ENCODE measurements at regions of chr9 and their contacts with region 1.

Region 1: GRCh38 chr9:73200694-73201452 is 49.2 kb downstream of the ANXA1 start:
- DNase-seq: no peak
- ATAC-seq: peak; percentile 82
- H3K4me3 ChIP-seq: no peak overlapping the region
- H3K27ac ChIP-seq: no peak overlapping the region
- H3K4me1 ChIP-seq: no peaks in the 10 kb centered on the region
- H3K27me3 ChIP-seq: no peaks in the 10 kb centered on the region
- CTCF ChIP-seq: peak in 2 of 3 experiments; percentile 43 to 58; a peak in 3 of 6 replicates
- EP300 ChIP-seq: no peak
- POLR2A ChIP-seq: no peak
- RAD21 ChIP-seq: peak; percentile 66

Region 2: DNA sequence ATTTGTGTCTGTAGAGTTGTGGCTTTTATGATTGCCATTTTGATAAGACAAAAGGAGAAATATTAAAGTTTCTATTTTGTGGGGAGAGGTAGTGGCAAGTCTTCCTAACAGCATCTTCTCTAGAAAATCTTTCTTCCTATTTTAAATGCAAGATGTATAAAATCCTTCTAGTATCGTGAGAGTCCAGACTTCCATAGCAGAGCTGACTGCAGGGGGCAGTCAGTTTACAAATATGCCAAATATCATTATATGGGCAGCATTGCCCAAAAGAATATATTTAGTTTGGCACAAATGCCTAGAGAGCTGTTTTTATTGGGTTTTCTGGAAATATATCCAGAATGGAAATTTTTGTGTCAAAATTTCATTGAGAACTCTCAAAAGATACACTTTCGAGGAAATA is 165.9 kb before region 1 on chr9:
- CTCF ChIA-PET with region 1: no interaction called
- POLR2A ChIA-PET with region 1: no interaction called
- RAD21 ChIA-PET with region 1: no interaction called
- SMC1A ChIA-PET with region 1: no interaction called
- in situ Hi-C with region 1: no loop called
- intact Hi-C with region 1: no loop called
- DNase-seq: no peak
- ATAC-seq: no peak
- H3K4me3 ChIP-seq: no peak overlapping the region
- H3K27ac ChIP-seq: no peak overlapping the region
- H3K4me1 ChIP-seq: no peaks in the 10 kb centered on the region
- H3K27me3 ChIP-seq: no peaks in the 10 kb centered on the region
- CTCF ChIP-seq: no peak
- EP300 ChIP-seq: no peak
- POLR2A ChIP-seq: no peak
- RAD21 ChIP-seq: no peak

Region 3: GRCh38 chr9:73132034-73132776 is 68.7 kb before region 1 on chr9:
- CTCF ChIA-PET with region 1: no interaction called
- POLR2A ChIA-PET with region 1: no interaction called
- RAD21 ChIA-PET with region 1: no interaction called
- SMC1A ChIA-PET with region 1: no interaction called
- in situ Hi-C with region 1: no loop called
- intact Hi-C with region 1: no loop called
- DNase-seq: peak; percentile 55
- ATAC-seq: peak; percentile 89
- H3K4me3 ChIP-seq: peak overlapping the region; percentile 52
- H3K27ac ChIP-seq: peak overlapping the region; percentile 82
- H3K4me1 ChIP-seq: peaks cover 3% of the 10 kb centered on the region; the same call in 1 of the 2 replicates
- H3K27me3 ChIP-seq: no peaks in the 10 kb centered on the region
- CTCF ChIP-seq: no peak
- EP300 ChIP-seq: no peak
- POLR2A ChIP-seq: peak; percentile 55
- RAD21 ChIP-seq: no peak

Region 4: DNA sequence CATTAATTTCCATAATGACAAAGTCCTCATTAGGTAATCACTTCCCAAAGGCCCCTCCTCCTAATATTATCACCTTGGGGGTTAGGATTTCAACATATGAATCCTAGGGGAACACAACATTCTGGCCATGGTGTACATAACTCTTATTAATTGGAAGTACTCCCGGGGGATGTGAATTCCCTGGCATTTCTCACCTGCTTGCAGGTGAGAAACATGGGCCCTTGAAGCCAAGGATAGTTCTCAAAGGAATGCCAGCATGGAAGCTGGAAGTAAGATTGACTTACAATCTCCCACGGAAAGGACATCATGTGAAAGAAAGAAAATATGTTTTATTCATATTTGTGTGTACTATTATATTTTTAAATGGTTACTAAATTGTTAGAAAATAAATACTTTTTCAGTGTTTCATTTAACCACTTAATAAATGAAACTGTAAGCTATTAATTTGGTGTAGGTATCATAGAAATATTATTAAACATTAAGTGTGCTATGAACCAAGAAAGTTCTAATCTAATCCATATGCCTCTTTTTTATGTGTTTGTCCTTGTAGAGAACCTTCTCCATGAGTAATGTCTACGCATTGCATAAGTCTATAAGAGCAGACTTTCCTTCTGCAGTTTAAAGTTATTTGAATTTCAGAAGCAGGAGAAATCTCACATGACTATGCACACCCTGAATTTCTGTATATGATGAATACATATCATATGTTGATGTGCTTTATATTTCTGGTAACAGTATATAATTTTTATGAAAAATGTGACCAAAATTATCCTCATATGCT is 10.2 kb after region 1 on chr9:
- CTCF ChIA-PET with region 1: interaction called, 70 read pairs
- POLR2A ChIA-PET with region 1: interaction called, 3 read pairs
- RAD21 ChIA-PET with region 1: interaction called, 24 read pairs
- SMC1A ChIA-PET with region 1: interaction called, 32 read pairs
- in situ Hi-C with region 1: no loop called
- intact Hi-C with region 1: no loop called
- DNase-seq: no peak
- ATAC-seq: no peak
- H3K4me3 ChIP-seq: no peak overlapping the region
- H3K27ac ChIP-seq: no peak overlapping the region
- H3K4me1 ChIP-seq: no peaks in the 10 kb centered on the region
- H3K27me3 ChIP-seq: no peaks in the 10 kb centered on the region
- CTCF ChIP-seq: no peak
- EP300 ChIP-seq: no peak
- POLR2A ChIP-seq: no peak
- RAD21 ChIP-seq: no peak

Region 5: GRCh38 chr9:73229543-73229942 is 28.7 kb after region 1 on chr9:
- CTCF ChIA-PET with region 1: interaction called, 7 read pairs
- POLR2A ChIA-PET with region 1: no interaction called
- RAD21 ChIA-PET with region 1: interaction called, 14 read pairs
- SMC1A ChIA-PET with region 1: interaction called, 13 read pairs
- in situ Hi-C with region 1: no loop called
- intact Hi-C with region 1: no loop called
- DNase-seq: no peak
- ATAC-seq: 0 out of 3 replicates have a peak, but pooled peaks have one; percentile 31
- H3K4me3 ChIP-seq: no peak overlapping the region
- H3K27ac ChIP-seq: no peak overlapping the region
- H3K4me1 ChIP-seq: no peaks in the 10 kb centered on the region
- H3K27me3 ChIP-seq: no peaks in the 10 kb centered on the region
- CTCF ChIP-seq: no peak
- EP300 ChIP-seq: no peak
- POLR2A ChIP-seq: no peak
- RAD21 ChIP-seq: no peak

Region 6: GRCh38 chr9:73565833-73566465 is 365.1 kb after region 1 on chr9:
- CTCF ChIA-PET with region 1: interaction called, 62 read pairs
- POLR2A ChIA-PET with region 1: no interaction called
- RAD21 ChIA-PET with region 1: interaction called, 22 read pairs
- SMC1A ChIA-PET with region 1: interaction called, 46 read pairs
- in situ Hi-C with region 1: no loop called
- intact Hi-C with region 1: loop called (anchors 1 kb)
- DNase-seq: no peak
- ATAC-seq: peak; percentile 58
- H3K4me3 ChIP-seq: no peak overlapping the region
- H3K27ac ChIP-seq: no peak overlapping the region
- H3K4me1 ChIP-seq: no peaks in the 10 kb centered on the region
- H3K27me3 ChIP-seq: no peaks in the 10 kb centered on the region
- CTCF ChIP-seq: peak; percentile 40 to 66 (median 40); a peak in 5 of 6 replicates
- EP300 ChIP-seq: no peak
- POLR2A ChIP-seq: no peak
- RAD21 ChIP-seq: peak; percentile 57

Region 7: GRCh38 chr9:74379718-74380117 is 1178.8 kb after region 1 on chr9:
- CTCF ChIA-PET with region 1: interaction called, 9 read pairs
- POLR2A ChIA-PET with region 1: no interaction called
- RAD21 ChIA-PET with region 1: interaction called, 5 read pairs
- SMC1A ChIA-PET with region 1: interaction called, 6 read pairs
- in situ Hi-C with region 1: loop called (anchors 25 kb)
- intact Hi-C with region 1: loop called (anchors 5 kb)
- DNase-seq: no peak
- ATAC-seq: peak; percentile 93
- H3K4me3 ChIP-seq: no peak overlapping the region
- H3K27ac ChIP-seq: no peak overlapping the region
- H3K4me1 ChIP-seq: no peaks in the 10 kb centered on the region
- H3K27me3 ChIP-seq: no peaks in the 10 kb centered on the region; a peak in 1 of 4 replicates
- CTCF ChIP-seq: peak; percentile 36 to 62 (median 44); a peak in 5 of 6 replicates
- EP300 ChIP-seq: no peak
- POLR2A ChIP-seq: no peak
- RAD21 ChIP-seq: peak; percentile 57

Region 8: GRCh38 chr9:74645007-74645639 is 1444.2 kb after region 1 on chr9:
- CTCF ChIA-PET with region 1: interaction called, 15 read pairs
- POLR2A ChIA-PET with region 1: no interaction called
- RAD21 ChIA-PET with region 1: no interaction called
- SMC1A ChIA-PET with region 1: no interaction called
- in situ Hi-C with region 1: no loop called
- intact Hi-C with region 1: no loop called
- DNase-seq: no peak
- ATAC-seq: peak; percentile 78
- H3K4me3 ChIP-seq: no peak overlapping the region
- H3K27ac ChIP-seq: no peak overlapping the region
- H3K4me1 ChIP-seq: no peaks in the 10 kb centered on the region
- H3K27me3 ChIP-seq: no peaks in the 10 kb centered on the region; a peak in 2 of 4 replicates
- CTCF ChIP-seq: peak; percentile 50 to 56 (median 51); a peak in 5 of 6 replicates
- EP300 ChIP-seq: no peak
- POLR2A ChIP-seq: no peak
- RAD21 ChIP-seq: peak; percentile 50